CD4-positive, alpha-beta T cell (primary cell): ENCODE measurements at regions of chr2 and their contacts with region 1.

Region 1: DNA sequence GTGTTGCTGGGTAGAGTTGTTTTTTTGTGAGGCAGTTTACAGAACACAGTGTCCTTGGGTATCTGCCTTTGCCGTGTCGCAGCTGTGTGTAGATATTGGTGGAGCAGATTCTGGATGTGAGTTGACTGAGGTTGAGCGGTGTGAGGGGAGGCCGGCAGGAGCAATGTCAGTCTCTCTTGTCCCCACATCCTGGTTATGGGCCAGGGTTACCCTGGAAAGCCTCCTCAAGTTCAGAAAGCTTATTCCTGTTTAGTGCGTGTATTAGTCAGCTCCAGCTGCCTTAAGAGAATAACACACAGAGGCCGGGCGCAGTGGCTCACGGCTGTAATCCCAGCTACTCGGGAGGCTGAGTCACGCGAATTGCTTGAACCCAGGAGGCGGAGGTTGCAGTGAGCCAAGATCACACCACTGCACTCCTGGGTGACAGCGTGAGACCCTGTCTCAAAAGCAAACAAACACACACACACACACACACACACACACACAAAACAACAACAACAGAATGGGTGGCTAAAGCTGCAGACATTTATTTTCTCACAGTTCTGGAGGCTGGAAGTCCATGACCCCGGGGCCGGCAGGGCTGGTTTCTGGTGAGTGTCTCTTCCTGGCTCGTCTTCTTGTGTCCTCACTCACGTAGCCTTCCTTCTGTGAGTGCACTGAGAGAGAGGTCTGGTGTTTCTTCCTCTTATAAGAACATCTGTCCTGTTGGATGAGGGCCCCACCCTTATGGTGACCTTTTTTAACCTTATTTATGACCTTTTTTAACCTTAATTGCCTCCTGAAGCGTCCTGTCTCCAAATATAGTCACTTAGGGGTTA is 5.1 kb downstream of the NCK2 start:
- DNase-seq: peak in 5 of 14 experiments; percentile 24 to 61 (median 56)
- ATAC-seq: peak; percentile 2
- H3K4me3 ChIP-seq: peak overlapping the region; percentile 87
- H3K4me3 Mint-ChIP-seq: peak overlapping the region; percentile 83
- H3K27ac ChIP-seq: peak overlapping the region; percentile 52
- H3K27ac Mint-ChIP-seq: peak overlapping the region; percentile 98
- H3K4me1 ChIP-seq: peaks cover 78% of the 10 kb centered on the region
- H3K4me1 Mint-ChIP-seq: peaks cover 92% of the 10 kb centered on the region
- H3K27me3 ChIP-seq: no peaks in the 10 kb centered on the region
- H3K27me3 Mint-ChIP-seq: no peaks in the 10 kb centered on the region
- CTCF ChIP-seq: no peak

Region 2: GRCh38 chr2:105179469-105180372 is 570.1 kb before region 1 on chr2:
- CTCF ChIA-PET with region 1: no interaction called
- POLR2A ChIA-PET with region 1: no interaction called
- intact Hi-C with region 1: no loop called
- DNase-seq: peak in 3 of 14 experiments; percentile 4 to 11 (median 8)
- ATAC-seq: no peak
- H3K4me3 ChIP-seq: no peak overlapping the region
- H3K4me3 Mint-ChIP-seq: no peak overlapping the region
- H3K27ac ChIP-seq: no peak overlapping the region
- H3K27ac Mint-ChIP-seq: no peak overlapping the region
- H3K4me1 ChIP-seq: no peaks in the 10 kb centered on the region
- H3K4me1 Mint-ChIP-seq: no peaks in the 10 kb centered on the region
- H3K27me3 ChIP-seq: peaks cover 4 to 5% of the 10 kb centered on the region in 2 experiments
- H3K27me3 Mint-ChIP-seq: peaks cover 33% of the 10 kb centered on the region
- CTCF ChIP-seq: no peak

Region 3: DNA sequence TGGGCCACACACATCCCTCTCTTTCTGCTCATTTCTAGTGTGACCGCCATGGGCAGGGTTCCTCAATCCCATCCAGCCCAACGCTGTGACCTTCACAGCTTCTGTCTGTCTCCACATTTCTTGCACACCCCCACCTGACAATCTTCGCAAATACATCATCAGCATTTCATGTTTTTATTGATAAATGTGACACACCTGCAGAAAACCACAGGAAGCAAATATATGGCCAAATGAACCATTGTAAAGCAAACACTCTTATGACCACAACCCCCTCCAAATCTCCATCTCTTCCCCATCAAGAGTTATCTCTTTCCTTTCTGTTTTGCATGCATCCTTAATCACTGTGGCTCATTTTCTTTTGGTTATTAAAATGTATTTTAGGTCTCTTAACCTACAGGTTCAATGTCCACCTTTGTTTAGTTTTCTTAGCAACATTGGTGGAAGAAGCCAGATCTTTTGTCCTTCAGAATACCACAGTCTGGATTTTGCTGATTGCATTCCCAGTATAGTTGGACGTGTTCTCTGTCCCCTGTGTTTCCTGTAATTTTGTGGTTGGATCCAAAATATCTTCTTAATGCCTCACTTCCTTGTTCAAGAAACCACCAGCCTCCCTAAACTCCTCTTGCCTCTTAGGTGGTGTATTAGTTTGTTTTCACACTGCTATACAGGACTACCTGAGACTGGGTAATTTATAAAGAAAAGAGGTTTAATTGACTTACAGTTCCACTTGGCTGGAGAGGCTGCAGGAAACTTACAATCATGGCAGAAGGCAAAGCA is 14.8 kb before region 1 on chr2:
- CTCF ChIA-PET with region 1: no interaction called
- POLR2A ChIA-PET with region 1: interaction called, 37 read pairs
- intact Hi-C with region 1: no loop called
- DNase-seq: no peak
- ATAC-seq: no peak
- H3K4me3 ChIP-seq: no peak overlapping the region
- H3K4me3 Mint-ChIP-seq: no peak overlapping the region
- H3K27ac ChIP-seq: no peak overlapping the region
- H3K27ac Mint-ChIP-seq: no peak overlapping the region
- H3K4me1 ChIP-seq: peaks cover 47% of the 10 kb centered on the region
- H3K4me1 Mint-ChIP-seq: peaks cover 54% of the 10 kb centered on the region
- H3K27me3 ChIP-seq: no peaks in the 10 kb centered on the region
- H3K27me3 Mint-ChIP-seq: no peaks in the 10 kb centered on the region
- CTCF ChIP-seq: no peak

Region 4: GRCh38 chr2:105761931-105762515 is 12.2 kb after region 1 on chr2:
- CTCF ChIA-PET with region 1: interaction called, 5 read pairs
- POLR2A ChIA-PET with region 1: interaction called, 52 read pairs
- intact Hi-C with region 1: no loop called
- DNase-seq: no peak
- ATAC-seq: no peak
- H3K4me3 ChIP-seq: peak overlapping the region; percentile 17
- H3K4me3 Mint-ChIP-seq: peak overlapping the region; percentile 58
- H3K27ac ChIP-seq: peak overlapping the region; percentile 22 to 44
- H3K27ac Mint-ChIP-seq: peak overlapping the region; percentile 98
- H3K4me1 ChIP-seq: peaks cover 87% of the 10 kb centered on the region
- H3K4me1 Mint-ChIP-seq: peaks cover 98% of the 10 kb centered on the region
- H3K27me3 ChIP-seq: no peaks in the 10 kb centered on the region
- H3K27me3 Mint-ChIP-seq: no peaks in the 10 kb centered on the region
- CTCF ChIP-seq: no peak

Region 5: DNA sequence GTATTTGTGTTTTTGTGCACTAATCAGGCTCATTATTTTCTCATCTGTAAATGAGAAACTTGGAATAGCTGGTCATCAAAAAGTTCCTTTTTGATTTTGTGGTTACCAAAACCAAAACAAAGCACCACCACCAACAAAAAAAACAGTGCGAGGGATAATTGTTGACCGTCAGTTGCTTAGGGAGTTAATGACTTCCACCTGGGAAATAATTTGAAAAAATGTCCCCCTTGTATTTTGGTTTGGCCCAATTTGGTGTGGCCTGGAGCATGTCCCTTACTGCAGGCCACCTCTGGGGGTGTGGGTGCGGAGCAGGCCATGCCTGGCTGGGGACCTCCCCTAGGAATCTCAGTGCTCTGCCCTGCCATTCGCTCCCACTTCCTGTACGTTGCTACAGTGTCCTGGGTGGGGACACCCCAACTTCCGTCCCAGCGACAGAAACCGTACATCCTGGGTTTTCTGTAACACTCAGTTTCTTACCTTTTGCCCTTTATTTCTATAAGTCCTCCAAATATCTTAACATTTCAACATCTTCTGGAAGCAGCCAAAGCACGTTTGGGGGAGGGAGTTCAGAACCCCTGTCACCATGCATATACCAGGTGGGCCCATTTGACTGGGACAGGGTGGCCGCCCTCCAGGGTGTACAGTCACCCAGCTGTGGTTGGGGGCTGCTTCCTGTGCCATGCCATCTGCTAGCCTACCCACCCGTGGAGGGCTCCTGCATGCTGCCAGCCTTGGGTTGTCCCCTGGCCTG is 26.2 kb after region 1 on chr2:
- CTCF ChIA-PET with region 1: interaction called, 4 read pairs
- POLR2A ChIA-PET with region 1: interaction called, 69 read pairs
- intact Hi-C with region 1: loop called in 1 of 2 experiments (anchors 1 kb)
- DNase-seq: peak in 5 of 14 experiments; percentile 28 to 86 (median 68)
- ATAC-seq: peak; percentile 62
- H3K4me3 ChIP-seq: peak overlapping the region; percentile 41
- H3K4me3 Mint-ChIP-seq: peak overlapping the region; percentile 79
- H3K27ac ChIP-seq: peak overlapping the region; percentile 69 to 92
- H3K27ac Mint-ChIP-seq: peak overlapping the region; percentile 98
- H3K4me1 ChIP-seq: peaks cover 92% of the 10 kb centered on the region
- H3K4me1 Mint-ChIP-seq: peaks cover 94% of the 10 kb centered on the region
- H3K27me3 ChIP-seq: no peaks in the 10 kb centered on the region
- H3K27me3 Mint-ChIP-seq: no peaks in the 10 kb centered on the region
- CTCF ChIP-seq: no peak

Region 6: DNA sequence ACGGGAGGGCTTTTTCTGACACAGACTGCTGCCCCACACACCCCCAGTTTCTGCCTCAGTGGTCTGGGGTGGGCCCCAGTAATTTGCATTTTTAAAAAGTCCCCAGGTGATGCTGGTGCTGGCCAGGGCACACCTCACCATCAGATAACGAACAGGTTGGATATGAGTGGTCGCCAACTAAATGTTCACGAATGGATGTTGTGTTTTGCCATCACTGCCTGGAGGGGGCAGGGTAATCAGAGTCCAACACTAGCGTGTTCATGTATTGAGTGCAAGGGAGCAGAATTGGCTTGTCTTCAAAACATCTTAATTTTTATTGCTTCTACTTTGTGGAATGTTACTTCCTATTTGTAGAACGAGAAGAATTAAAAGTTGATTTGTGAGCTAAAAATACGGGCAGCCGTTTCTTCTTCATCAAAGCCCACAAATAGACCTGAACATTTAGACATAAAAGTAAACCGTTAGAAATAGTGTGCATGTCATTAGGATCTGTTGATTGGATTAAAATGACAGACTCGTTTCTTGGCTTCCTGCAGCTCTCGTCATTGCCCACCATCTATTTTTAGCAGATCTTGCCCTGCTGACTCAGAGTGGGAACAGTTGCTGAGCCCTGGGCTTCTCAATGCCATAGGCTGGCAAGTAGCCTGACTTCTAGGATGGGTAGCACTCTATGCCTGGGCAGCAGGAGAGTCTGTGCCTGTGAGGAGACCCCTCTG is 40.1 kb after region 1 on chr2:
- CTCF ChIA-PET with region 1: no interaction called
- POLR2A ChIA-PET with region 1: interaction called, 8 read pairs
- intact Hi-C with region 1: loop called in 1 of 2 experiments (anchors 5 kb)
- DNase-seq: peak in 9 of 14 experiments; percentile 37 to 85 (median 67)
- ATAC-seq: peak; percentile 85
- H3K4me3 ChIP-seq: peak overlapping the region; percentile 24
- H3K4me3 Mint-ChIP-seq: peak overlapping the region; percentile 79
- H3K27ac ChIP-seq: peak overlapping the region; percentile 76 to 83
- H3K27ac Mint-ChIP-seq: peak overlapping the region; percentile 98
- H3K4me1 ChIP-seq: peaks cover 89% of the 10 kb centered on the region
- H3K4me1 Mint-ChIP-seq: peaks cover 92% of the 10 kb centered on the region
- H3K27me3 ChIP-seq: no peaks in the 10 kb centered on the region
- H3K27me3 Mint-ChIP-seq: no peaks in the 10 kb centered on the region
- CTCF ChIP-seq: no peak